ENCODE measurements at regions of chr1 and their contacts with region 1.

Region 1: GRCh38 chr1:40338745-40339424 is 21.8 kb upstream of the COL9A2 start:
- DNase-seq: peak; percentile 96
- ATAC-seq: peak; percentile 98
- H3K4me3 Mint-ChIP-seq: no peak overlapping the region
- H3K27ac Mint-ChIP-seq: no peak overlapping the region
- H3K4me1 Mint-ChIP-seq: 0 out of 2 replicates have a peak, but pooled peaks cover 3% of the 10 kb centered on the region
- H3K27me3 Mint-ChIP-seq: peaks cover 37% of the 10 kb centered on the region
- CTCF ChIP-seq: peak; percentile 96

Region 2: DNA sequence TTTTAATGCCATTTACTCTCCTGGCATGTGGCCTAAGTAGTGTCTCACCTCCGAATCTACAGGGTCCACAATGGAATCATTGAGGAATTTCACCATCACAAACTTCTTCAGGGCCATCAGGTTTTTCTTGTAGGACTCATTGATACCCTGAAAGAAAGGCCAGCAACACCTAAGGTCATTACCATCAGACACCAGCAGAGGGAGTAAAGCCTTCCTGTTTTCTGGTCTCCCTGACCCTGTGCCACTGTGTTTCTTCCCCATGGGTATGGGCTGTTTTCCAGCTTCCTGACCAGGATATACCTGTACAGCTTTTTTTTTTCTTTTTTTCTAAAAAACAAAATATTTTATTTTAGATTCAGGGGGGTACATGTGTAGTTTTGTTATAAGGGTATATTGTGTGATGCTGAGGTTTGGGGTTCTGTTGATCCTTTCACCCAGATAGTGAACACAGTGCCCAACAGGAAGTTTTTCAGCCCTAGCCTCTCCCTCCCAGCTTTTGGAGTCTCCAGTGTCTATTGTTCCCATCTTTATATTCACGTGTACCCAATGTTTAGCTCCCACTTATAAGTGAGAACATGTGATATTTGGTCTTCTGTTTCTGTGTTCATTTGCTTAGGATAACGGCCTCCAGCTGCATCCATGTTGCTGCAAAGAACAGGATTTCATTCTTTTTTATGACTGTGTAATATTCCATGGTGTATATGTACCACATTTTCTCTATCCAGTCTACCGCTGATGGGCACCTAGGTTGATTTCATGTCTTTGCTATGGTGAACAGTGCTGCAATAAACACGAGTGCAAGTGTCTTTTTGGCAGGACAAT is 260.2 kb before region 1 on chr1:
- CTCF ChIA-PET with region 1: interaction called, 40 read pairs
- POLR2A ChIA-PET with region 1: no interaction called
- DNase-seq: peak; percentile 59
- ATAC-seq: peak; percentile 94
- H3K4me3 Mint-ChIP-seq: no peak overlapping the region
- H3K27ac Mint-ChIP-seq: no peak overlapping the region
- H3K4me1 Mint-ChIP-seq: no peaks in the 10 kb centered on the region
- H3K27me3 Mint-ChIP-seq: no peaks in the 10 kb centered on the region
- CTCF ChIP-seq: peak; percentile 45; the same call in 1 of the 2 replicates

Region 3: DNA sequence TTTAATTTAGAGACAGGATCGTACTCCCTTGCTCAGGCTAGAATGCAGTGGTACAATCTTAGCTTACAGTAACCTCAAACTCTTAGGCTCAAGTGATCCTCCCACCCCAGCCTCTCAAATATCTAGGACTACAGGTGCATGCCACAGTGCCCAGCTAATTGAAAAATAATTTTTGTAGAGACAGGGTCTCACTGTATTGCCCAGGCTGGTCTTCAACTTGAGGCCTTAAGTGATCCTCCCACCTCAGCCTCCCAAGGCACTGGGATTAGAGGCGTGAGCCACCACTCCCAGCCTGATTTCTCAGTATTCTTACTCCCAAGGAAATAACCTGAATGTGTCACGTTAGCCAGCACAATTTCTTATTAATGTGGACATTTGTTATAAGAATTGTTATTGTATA is 167.8 kb before region 1 on chr1:
- CTCF ChIA-PET with region 1: interaction called, 10 read pairs
- POLR2A ChIA-PET with region 1: no interaction called
- DNase-seq: no peak
- ATAC-seq: no peak
- H3K4me3 Mint-ChIP-seq: no peak overlapping the region
- H3K27ac Mint-ChIP-seq: no peak overlapping the region
- H3K4me1 Mint-ChIP-seq: 0 out of 2 replicates have a peak, but pooled peaks cover 2% of the 10 kb centered on the region
- H3K27me3 Mint-ChIP-seq: no peaks in the 10 kb centered on the region
- CTCF ChIP-seq: no peak

Region 4: DNA sequence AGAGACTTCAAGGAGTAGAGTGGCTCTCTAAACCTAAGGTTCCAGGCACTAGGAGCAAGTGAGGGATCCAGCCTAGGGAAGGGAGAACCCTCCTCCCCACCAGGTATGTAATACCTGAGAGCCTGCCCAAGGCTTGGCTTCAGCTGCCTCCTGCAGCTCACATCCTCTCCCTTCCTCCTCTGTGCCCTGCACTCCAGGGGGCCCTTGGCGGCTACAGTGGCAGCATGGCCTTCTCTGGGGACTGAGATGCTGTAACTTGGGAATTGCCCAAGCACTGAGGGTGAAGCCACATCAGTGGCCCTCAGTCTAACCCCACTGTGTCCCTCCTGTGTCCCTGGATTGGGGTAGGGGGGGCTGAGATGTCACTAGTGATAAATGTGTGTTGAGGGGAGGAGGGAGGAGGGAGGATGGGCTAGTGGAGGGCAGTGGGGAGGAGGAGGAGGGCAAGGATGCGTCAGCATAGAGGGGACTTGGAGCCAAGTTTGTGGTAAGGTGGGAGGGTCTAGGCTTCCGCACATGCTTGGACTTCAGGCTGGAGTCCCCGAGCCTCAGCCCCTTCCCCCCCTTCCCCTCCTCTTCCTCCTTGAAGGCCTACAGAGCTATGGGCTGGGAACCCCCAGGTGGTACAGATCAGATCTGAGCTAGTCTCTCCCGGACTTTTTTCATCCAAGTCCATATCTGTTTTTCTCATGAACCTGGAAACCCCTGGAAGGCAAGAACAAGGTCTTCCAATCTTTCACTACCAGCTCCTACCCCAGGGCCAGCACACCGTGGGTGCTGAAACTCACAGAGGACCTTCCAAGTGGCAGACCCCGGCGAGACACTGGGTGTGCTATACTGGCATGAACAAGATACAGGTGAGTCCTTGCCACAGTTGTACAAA is 39.3 kb before region 1 on chr1:
- CTCF ChIA-PET with region 1: interaction called, 20 read pairs
- POLR2A ChIA-PET with region 1: no interaction called
- DNase-seq: no peak
- ATAC-seq: no peak
- H3K4me3 Mint-ChIP-seq: no peak overlapping the region
- H3K27ac Mint-ChIP-seq: no peak overlapping the region
- H3K4me1 Mint-ChIP-seq: no peaks in the 10 kb centered on the region
- H3K27me3 Mint-ChIP-seq: peaks cover 19% of the 10 kb centered on the region
- CTCF ChIP-seq: no peak

Region 5: DNA sequence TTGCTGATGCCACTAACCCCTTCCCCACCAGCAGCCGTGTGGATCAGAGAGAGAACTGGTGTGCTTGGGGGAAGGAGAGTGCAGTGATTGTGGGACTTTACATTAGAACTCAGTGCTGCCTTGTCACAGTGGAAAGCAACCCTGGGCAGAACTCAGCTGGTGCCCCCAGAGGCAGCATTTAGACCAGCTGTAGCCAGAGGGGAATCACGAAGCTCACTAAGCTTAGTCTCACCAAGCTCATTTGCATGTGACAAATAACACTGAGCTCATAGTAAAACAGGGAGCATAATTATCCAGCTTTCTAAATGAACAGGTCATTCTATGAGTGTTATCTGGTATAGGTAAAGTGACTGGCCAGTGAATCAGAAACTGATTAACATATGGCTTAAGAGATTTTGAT is 24.8 kb after region 1 on chr1:
- CTCF ChIA-PET with region 1: interaction called, 16 read pairs
- POLR2A ChIA-PET with region 1: no interaction called
- DNase-seq: peak; percentile 27
- ATAC-seq: peak; percentile 87
- H3K4me3 Mint-ChIP-seq: no peak overlapping the region
- H3K27ac Mint-ChIP-seq: no peak overlapping the region
- H3K4me1 Mint-ChIP-seq: peaks cover 3% of the 10 kb centered on the region; the same call in 1 of the 2 replicates
- H3K27me3 Mint-ChIP-seq: peaks cover 18% of the 10 kb centered on the region
- CTCF ChIP-seq: no peak

Region 6: DNA sequence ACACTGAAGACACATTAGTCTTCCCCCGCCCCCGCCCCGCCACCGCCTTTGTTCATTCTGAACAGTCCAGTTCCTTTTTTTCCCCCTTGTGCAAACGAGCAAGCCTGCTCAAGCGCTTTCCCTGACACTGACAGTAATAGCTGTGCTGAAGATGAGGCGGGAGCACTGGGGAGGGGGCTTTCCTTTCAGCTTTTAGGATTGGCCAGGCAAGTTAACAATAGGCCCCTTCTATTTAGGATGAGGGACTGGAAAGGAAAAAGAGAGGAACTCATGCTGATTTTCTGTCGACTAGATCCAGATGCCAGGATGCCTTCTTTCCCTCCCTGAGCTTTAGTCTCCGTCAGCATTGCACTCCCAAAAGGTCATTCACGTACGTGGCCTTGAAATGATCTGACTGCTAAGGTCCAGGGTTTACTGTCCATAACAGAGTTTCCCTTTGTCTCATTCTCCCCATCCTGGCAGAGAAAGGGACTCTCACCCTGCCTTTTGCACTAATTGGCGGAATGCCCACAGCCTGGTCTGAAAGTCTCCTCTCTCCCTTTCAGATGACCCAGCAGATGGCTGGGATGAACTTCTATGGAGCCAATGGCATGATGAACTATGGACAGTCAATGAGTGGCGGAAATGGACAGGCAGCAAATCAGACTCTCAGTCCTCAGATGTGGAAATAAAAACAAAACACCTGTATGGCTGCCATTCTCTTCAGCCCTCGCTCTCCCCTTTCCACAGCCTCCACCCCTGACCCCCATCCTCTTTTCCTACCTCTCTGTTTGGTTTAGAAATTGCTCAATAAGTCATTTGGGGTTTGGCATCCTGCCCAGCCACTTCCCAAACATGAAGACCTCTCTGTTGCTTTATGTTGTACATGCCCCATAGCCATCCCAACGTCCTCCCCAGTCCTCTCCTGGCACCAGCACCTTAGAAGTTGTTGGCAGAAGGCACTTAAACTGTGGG is 82.8 kb after region 1 on chr1:
- CTCF ChIA-PET with region 1: interaction called, 11 read pairs
- POLR2A ChIA-PET with region 1: no interaction called
- DNase-seq: no peak
- ATAC-seq: no peak
- H3K4me3 Mint-ChIP-seq: no peak overlapping the region
- H3K27ac Mint-ChIP-seq: no peak overlapping the region
- H3K4me1 Mint-ChIP-seq: no peaks in the 10 kb centered on the region
- H3K27me3 Mint-ChIP-seq: no peaks in the 10 kb centered on the region; the same call in 1 of the 2 replicates
- CTCF ChIP-seq: no peak